Cardiac septum (tissue), 1 donor: ENCODE measurements at regions of chr1 and their contacts with region 1.

Region 1: GRCh38 chr1:22704440-22705067 is 6.1 kb upstream of the EPHB2 start:
- DNase-seq: peak; percentile 83

Region 2: DNA sequence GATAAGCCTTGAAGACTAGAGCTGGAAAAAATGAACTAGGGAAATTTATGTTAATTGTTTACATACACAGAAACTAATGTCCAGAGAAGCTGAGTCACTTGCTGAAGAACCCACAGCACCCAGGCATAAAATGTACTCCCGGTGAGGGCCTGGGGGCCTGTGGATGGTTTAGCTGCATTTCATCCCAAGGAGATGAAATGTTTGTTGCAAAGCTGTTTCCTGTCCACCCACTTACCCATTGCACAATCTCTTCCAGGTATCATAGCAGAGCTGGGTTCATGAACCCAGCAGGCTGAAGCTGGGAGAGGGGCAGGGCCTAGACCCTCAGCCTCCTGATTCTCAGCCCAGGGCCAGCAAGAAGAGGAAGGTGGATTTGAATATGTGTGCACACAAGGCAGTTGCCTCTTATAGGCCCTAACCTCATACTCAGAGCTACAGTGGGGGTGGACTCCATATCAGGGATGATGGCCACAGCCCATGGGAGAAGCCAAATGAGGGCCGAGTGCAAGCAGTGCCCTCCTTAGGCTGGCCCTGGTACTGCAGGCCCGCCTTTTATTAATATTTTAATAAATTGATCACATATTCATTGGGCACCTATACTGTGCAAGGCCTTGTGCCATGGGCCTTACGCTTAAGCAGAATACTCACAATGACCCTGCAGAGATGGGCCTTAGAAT is 157.3 kb after region 1 on chr1:
- intact Hi-C with region 1: loop called (anchors 5 kb)
- DNase-seq: no peak

Region 3: GRCh38 chr1:22889213-22889827 is 184.8 kb after region 1 on chr1:
- intact Hi-C with region 1: loop called (anchors 1 kb)
- DNase-seq: no peak